ENCODE measurements at regions of chr9 and their contacts with region 1.

Region 1: DNA sequence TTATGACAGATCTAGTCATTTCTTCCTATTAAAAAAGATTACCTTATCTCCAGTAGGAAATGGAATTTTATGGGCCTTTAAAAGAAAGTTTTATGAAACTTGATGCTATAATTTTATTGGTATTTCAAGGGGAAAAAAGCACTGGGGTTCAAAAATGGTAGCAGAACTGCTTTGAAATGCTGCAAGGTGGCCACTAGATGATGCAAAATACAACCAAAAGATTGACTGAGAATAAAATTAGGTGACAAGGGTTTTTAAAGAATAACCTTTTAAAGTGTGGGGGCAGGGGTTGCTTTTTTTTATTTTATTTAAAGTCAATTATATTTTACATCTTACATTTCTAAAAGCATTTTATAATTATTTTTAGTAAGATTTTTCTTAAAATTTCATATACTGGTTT is 61.7 kb downstream of the KLF9 start:
- DNase-seq: no peak
- H3K4me3 ChIP-seq: no peak overlapping the region
- H3K27ac ChIP-seq: no peak overlapping the region
- H3K4me1 ChIP-seq: peaks cover 0 to 5% (median 0%) of the 10 kb centered on the region in 3 donors
- H3K27me3 ChIP-seq: no peaks in the 10 kb centered on the region
- CTCF ChIP-seq: peak; percentile 31 to 61 (median 48)
- POLR2A ChIP-seq: no peak

Region 2: GRCh38 chr9:70494221-70494620 is 141.4 kb after region 1 on chr9:
- intact Hi-C with region 1: loop called (anchors 5 kb)
- DNase-seq: no peak
- H3K4me3 ChIP-seq: no peak overlapping the region
- H3K27ac ChIP-seq: peak overlapping the region in 3 of 4 donors; percentile 18 to 50 (median 41)
- H3K4me1 ChIP-seq: peaks cover 4 to 29% (median 10%) of the 10 kb centered on the region in 3 donors
- H3K27me3 ChIP-seq: no peaks in the 10 kb centered on the region
- CTCF ChIP-seq: no peak
- POLR2A ChIP-seq: no peak

Region 3: DNA sequence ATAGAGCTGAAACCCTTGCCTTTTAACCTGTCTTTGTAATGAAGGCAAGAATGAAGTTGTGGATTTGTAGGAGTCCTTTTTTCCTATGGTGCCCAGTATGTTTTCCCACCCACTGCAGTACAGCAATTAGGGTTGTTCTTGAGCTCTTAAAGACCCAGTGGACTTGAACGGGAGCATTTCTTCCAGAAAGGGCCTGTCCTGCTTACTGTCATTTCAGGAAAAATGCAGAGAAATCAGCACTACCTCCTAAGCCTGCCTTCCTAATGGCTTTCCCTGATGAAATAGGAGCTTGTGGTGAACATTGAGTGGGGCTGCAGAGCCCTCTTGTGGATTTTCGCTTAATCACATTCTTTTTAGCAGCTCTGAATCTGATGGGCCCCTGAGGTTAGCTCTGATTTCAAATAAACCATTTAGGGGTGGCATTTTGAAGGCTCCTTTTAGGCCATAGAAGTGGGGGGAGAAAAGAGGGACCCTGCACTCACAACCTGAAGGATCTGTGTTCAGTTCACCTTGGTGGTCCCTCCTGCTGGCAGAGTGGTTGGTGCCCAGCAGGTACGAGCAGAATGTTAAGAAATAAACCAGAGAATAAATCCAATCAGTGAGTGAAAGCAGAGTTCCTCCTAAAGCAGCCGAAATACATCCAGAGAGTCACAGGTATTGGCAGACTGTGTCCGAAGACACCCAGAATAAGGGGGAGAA is 249.7 kb after region 1 on chr9:
- intact Hi-C with region 1: loop called (anchors 5 kb)
- DNase-seq: no peak
- H3K4me3 ChIP-seq: peak overlapping the region in 1 of 4 donors; percentile 1
- H3K27ac ChIP-seq: peak overlapping the region; percentile 63 to 93 (median 88)
- H3K4me1 ChIP-seq: peaks cover 15 to 34% (median 17%) of the 10 kb centered on the region in 3 donors
- H3K27me3 ChIP-seq: no peaks in the 10 kb centered on the region
- CTCF ChIP-seq: peak in 5 of 6 experiments; percentile 71 to 90 (median 79)
- POLR2A ChIP-seq: no peak